Gastrocnemius medialis (tissue), 4 donors: ENCODE measurements at regions of chr7 and their contacts with region 1.

Region 1: DNA sequence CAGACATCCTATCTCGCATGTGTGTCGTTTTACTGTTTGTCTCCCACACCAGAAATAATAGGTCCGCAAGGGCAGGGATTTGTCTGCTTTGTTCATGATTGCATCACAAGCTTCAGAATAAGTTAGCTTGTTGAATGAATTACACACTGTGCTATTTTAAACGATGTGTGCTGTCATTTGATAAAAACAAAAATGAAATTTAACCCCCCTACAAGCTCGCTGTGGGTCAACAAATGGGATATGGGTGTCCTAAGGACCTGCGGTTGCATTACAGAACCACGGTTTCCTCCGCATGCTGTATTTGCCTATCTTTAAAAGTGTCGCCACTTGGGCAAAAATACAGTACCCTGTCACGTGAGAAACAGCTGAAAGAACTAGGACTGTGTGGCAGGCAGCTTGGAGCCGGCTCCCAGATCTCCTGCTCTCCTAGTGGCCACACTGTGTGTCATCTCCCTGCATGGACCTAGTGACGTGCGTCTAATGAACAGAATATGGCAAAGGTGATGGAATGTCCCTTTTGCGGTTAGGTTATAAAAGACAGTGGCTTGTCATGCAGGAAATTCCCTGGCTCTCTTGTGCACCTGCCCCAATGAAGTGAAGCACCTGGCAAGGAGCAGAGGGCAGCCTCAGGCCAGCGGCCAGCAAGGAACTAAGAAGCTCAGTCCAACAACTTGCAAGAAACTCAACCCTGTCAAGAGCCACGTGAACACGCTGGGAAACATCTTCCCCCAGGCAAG is 32.9 kb upstream of the CRYGN start:
- DNase-seq: peak; percentile 84 to 92
- ATAC-seq: peak; percentile 93 to 94
- H3K4me3 ChIP-seq: no peak overlapping the region
- H3K27ac ChIP-seq: peak overlapping the region; percentile 79 to 90 (median 86)
- H3K4me1 ChIP-seq: peaks cover 31 to 51% of the 10 kb centered on the region in 2 donors
- H3K27me3 ChIP-seq: no peaks in the 10 kb centered on the region
- CTCF ChIP-seq: peak in 3 of 5 experiments; percentile 24 to 58 (median 40)
- POLR2A ChIP-seq: peak in 1 of 2 donors; percentile 38

Region 2: DNA sequence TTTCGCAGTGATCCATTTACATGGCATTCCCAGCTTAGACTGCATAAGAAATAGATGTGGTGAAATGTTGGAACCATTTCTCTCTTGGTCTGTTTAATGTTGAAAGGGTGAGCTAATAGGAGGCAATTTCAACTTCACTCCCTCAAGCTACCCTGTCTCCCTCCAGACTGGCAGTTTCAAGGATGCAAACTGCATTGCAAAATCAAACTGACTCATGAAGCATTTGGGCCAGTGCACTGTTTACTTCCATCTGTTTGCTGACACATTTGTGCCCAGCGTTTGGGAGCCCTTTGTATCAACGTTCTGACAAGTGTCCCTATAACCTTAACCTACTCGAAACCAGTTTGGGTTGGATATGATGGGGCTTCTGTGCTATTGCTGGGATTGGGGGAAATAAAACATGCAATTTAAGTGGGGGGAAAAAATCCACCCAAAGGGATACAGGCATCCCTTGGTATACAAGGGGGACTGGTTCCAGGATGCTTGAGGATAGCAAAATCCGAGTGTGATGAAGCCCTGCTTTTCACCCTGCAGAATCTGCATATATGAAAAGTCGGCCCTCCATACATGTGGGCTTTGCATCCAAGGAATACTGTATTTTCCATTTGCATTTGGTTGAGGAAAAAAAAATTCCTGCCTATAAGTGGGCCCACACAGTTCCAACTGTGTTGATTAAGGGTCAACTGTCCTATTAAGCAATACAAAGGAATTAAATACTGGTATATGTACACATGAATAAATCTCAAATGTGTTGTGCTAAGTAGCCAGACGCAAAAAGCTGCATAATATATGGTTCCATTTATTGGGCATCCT is 31.3 kb after region 1 on chr7:
- in situ Hi-C with region 1: no loop called
- intact Hi-C with region 1: loop called (anchors 2 kb)
- DNase-seq: peak; percentile 78 to 80
- ATAC-seq: peak; percentile 89 to 93
- H3K4me3 ChIP-seq: no peak overlapping the region
- H3K27ac ChIP-seq: peak overlapping the region; percentile 77 to 98 (median 88)
- H3K4me1 ChIP-seq: peaks cover 84 to 89% of the 10 kb centered on the region in 2 donors
- H3K27me3 ChIP-seq: no peaks in the 10 kb centered on the region
- CTCF ChIP-seq: no peak
- POLR2A ChIP-seq: peak in 1 of 2 donors; percentile 59